MCF 10A (cell line): ENCODE measurements at regions of chr12 and their contacts with region 1.

Region 1: DNA sequence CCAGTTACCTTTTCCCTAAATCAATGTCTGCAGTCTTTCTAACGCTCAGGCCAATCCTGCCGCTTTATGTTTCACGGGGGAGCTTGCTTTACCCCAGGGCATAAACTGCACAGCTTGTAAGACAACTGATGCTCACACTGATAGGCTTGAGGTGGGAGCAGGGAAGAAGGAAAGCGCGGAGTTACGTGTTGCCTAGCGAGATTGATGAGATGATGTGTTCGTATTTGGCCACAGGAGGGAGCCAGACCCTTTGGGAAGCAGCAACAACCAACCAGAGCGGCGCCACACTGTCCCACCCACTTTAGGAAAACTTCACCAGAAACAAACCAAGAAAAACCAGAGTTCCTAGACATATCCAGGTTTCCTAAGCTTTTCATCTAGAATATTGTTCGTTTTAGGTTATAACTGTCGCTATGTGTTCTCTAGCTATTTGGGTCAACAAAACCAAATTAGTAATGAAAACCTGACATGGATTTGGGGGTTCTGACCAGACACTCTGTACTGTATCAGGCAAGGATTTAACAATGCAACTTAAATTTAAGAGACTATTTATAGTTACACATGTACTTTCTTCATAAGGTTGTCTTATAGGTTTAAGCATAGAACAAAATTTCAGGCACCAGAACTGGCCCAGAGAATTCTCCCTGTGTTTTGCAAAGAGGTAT is 2.4 kb downstream of the IL26 start:
- DNase-seq: peak; percentile 88
- H3K4me3 Mint-ChIP-seq: no peak overlapping the region
- H3K27ac Mint-ChIP-seq: no peak overlapping the region
- H3K4me1 Mint-ChIP-seq: peaks cover 20% of the 10 kb centered on the region
- H3K27me3 Mint-ChIP-seq: peaks cover 12% of the 10 kb centered on the region
- CTCF ChIP-seq: peak; percentile 87

Region 2: GRCh38 chr12:67155863-67156262 is 1067.4 kb before region 1 on chr12:
- CTCF ChIA-PET with region 1: no interaction called
- POLR2A ChIA-PET with region 1: no interaction called
- intact Hi-C with region 1: no loop called
- DNase-seq: peak; percentile 77
- H3K4me3 Mint-ChIP-seq: no peak overlapping the region
- H3K27ac Mint-ChIP-seq: no peak overlapping the region
- H3K4me1 Mint-ChIP-seq: peaks cover 10% of the 10 kb centered on the region
- H3K27me3 Mint-ChIP-seq: peaks cover 18% of the 10 kb centered on the region
- CTCF ChIP-seq: no peak

Region 3: DNA sequence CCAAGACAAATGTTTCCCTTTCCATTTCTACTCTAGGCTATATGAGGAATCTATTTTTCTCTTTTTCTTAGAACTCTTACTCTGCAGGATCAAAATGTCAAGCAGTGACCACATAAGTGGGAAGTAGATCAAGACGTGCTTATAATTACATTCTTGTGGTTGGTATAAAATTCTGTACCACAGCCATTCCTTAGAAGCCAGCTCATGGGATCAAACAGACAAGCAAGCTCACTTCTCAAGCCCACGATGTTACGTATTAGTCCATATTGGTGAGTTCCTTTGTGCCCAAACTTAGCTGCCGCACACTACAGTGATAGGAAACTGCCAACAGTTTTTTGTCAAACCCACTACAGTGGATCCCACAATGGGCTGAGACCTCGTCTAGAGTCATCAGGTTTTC is 117.1 kb before region 1 on chr12:
- CTCF ChIA-PET with region 1: no interaction called
- POLR2A ChIA-PET with region 1: no interaction called
- intact Hi-C with region 1: no loop called
- DNase-seq: peak; percentile 16
- H3K4me3 Mint-ChIP-seq: no peak overlapping the region
- H3K27ac Mint-ChIP-seq: no peak overlapping the region
- H3K4me1 Mint-ChIP-seq: peaks cover 4% of the 10 kb centered on the region
- H3K27me3 Mint-ChIP-seq: peaks cover 9% of the 10 kb centered on the region
- CTCF ChIP-seq: no peak

Region 4: DNA sequence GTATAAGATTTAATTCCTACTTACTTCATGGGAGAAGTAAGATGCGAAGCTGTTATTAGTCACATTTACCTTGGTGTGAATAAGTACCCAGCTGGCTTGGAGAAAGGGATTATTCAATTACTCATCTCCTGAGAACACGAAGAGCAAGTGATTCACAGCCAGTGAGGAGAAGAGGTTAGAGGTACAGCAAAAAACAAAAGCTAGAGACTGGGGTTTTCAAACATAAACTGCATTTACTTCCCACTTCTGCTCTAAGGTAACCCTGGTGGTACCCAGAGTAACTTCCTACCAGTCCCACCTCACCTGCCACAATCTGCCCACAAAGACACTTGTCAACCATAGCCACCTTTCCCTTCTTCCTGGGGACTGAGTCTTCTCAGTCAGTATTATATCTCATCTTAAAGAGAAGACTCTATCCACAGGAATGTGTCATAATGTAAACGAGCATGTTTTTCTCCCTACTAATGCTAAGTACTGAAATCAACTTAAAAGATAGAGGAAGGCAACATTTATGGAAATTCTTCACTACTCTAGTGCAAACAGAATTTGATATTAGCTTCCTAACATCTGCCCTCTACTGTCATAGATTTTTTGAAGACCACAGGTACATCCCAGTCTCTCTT is 36.2 kb after region 1 on chr12:
- CTCF ChIA-PET with region 1: interaction called, 13 read pairs
- POLR2A ChIA-PET with region 1: interaction called, 5 read pairs
- intact Hi-C with region 1: no loop called
- DNase-seq: peak; percentile 86
- H3K4me3 Mint-ChIP-seq: peak overlapping the region; percentile 6
- H3K27ac Mint-ChIP-seq: peak overlapping the region; percentile 87
- H3K4me1 Mint-ChIP-seq: peaks cover 27% of the 10 kb centered on the region
- H3K27me3 Mint-ChIP-seq: no peaks in the 10 kb centered on the region
- CTCF ChIP-seq: no peak

Region 5: GRCh38 chr12:68310370-68310769 is 87.2 kb after region 1 on chr12:
- CTCF ChIA-PET with region 1: interaction called, 151 read pairs
- POLR2A ChIA-PET with region 1: interaction called, 24 read pairs
- intact Hi-C with region 1: no loop called
- DNase-seq: peak; percentile 63
- H3K4me3 Mint-ChIP-seq: no peak overlapping the region
- H3K27ac Mint-ChIP-seq: no peak overlapping the region
- H3K4me1 Mint-ChIP-seq: no peaks in the 10 kb centered on the region
- H3K27me3 Mint-ChIP-seq: no peaks in the 10 kb centered on the region
- CTCF ChIP-seq: no peak

Region 6: GRCh38 chr12:68326716-68327115 is 103.5 kb after region 1 on chr12:
- CTCF ChIA-PET with region 1: interaction called, 60 read pairs
- POLR2A ChIA-PET with region 1: interaction called, 16 read pairs
- intact Hi-C with region 1: no loop called
- DNase-seq: no peak
- H3K4me3 Mint-ChIP-seq: no peak overlapping the region
- H3K27ac Mint-ChIP-seq: peak overlapping the region; percentile 19
- H3K4me1 Mint-ChIP-seq: peaks cover 11% of the 10 kb centered on the region
- H3K27me3 Mint-ChIP-seq: no peaks in the 10 kb centered on the region
- CTCF ChIP-seq: no peak

Region 7: DNA sequence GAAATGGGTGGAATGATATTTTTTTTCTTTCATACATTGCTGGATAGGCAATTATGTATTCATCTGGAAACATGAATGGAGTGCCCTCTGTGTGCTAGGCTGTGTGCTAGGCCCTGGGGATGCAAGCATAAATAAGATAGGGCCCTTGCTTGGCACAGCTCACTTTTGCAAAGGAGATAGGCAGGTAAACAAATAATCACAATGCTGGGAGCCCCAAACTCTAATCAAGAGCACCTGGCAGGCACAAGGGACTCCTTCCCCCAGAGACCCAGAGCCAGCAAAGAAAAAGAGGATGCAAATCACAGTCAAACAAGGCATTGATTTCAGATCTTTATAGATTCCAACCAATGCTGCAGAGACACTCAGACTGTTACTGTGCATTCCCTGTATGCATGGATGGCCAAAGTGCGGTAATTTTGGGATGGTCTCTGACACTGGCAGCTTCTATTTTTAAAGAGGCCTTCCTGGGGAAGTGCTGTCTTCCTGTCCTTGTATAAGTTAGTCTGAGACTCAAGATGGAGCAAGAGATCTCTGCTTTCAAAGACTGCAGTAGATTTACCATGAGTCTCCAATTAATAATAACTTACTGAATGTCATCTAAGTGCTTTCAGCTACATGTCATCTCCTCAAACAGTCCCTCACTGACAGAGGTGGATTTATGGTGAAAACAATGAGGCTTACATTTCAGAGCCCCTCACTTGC is 754.8 kb after region 1 on chr12:
- CTCF ChIA-PET with region 1: no interaction called
- POLR2A ChIA-PET with region 1: no interaction called
- intact Hi-C with region 1: no loop called
- DNase-seq: no peak
- H3K4me3 Mint-ChIP-seq: no peak overlapping the region
- H3K27ac Mint-ChIP-seq: no peak overlapping the region
- H3K4me1 Mint-ChIP-seq: peaks cover 27% of the 10 kb centered on the region
- H3K27me3 Mint-ChIP-seq: no peaks in the 10 kb centered on the region
- CTCF ChIP-seq: no peak